PC-3 (cell line): ENCODE measurements at regions of chr3 and their contacts with region 1.

Region 1: DNA sequence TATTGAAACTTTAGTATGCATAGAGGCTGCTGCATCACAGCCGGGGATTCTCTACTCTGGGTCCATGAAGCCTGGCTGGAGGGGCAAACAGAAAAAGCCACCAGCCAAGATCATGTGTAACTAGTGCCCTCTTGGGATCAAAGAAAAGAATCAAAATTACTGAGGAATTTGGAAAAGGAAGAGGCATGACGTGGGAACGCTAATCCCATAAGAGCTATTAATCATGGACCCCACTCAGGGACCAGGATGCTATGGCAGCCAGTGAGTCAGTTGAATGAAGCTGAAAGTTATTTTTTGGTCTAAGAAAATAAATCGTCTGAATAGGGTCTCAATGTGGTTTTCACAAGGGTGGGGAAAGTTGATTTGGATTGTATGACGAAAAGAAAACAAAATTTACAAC is 1165.1 kb downstream of the ROBO2 start:
- DNase-seq: peak; percentile 82
- ATAC-seq: peak; percentile 81
- H3K4me3 ChIP-seq: peak overlapping the region; percentile 51
- H3K27ac ChIP-seq: 0 out of 2 replicates have a peak overlapping the region, but pooled peaks have one; percentile 6
- H3K4me1 ChIP-seq: peaks cover 4% of the 10 kb centered on the region; the same call in 1 of the 2 replicates
- H3K27me3 ChIP-seq: no peaks in the 10 kb centered on the region
- CTCF ChIP-seq: peak; percentile 77

Region 2: DNA sequence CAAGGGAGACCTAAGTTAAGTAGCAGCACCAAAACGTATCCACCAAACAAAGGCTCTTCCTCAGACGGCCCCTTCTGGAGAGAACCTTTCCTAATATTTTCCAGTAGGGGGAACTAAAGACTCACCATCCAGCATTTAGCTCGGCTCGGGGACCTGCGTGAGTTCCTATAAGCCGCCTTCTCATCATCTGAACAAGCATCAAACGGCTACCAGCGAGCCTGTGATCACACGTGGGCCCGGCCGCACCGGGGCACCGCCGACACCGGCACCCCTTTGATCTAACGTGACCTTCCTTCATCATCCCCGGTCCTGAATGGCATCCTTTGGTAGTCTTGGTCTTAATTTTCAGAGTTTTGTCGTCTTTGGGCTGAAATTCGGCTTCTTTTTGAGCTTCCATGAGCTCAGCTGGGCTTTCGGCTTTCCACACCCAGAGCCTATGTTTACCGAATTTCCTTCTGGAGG is 1166.5 kb before region 1 on chr3:
- CTCF ChIA-PET with region 1: interaction called, 8 read pairs
- POLR2A ChIA-PET with region 1: no interaction called
- intact Hi-C with region 1: loop called (anchors 2 kb)
- DNase-seq: peak; percentile 83
- ATAC-seq: peak; percentile 97
- H3K4me3 ChIP-seq: peak overlapping the region; percentile 29; the same call in 1 of the 2 replicates
- H3K27ac ChIP-seq: no peak overlapping the region
- H3K4me1 ChIP-seq: no peaks in the 10 kb centered on the region
- H3K27me3 ChIP-seq: peaks cover 72% of the 10 kb centered on the region
- CTCF ChIP-seq: peak; percentile 77

Region 3: GRCh38 chr3:77320514-77320913 is 884.5 kb before region 1 on chr3:
- CTCF ChIA-PET with region 1: no interaction called
- POLR2A ChIA-PET with region 1: no interaction called
- intact Hi-C with region 1: loop called (anchors 10 kb)
- DNase-seq: peak; percentile 69
- ATAC-seq: no peak
- H3K4me3 ChIP-seq: no peak overlapping the region
- H3K27ac ChIP-seq: no peak overlapping the region
- H3K4me1 ChIP-seq: peaks cover 11% of the 10 kb centered on the region
- H3K27me3 ChIP-seq: peaks cover 6% of the 10 kb centered on the region
- CTCF ChIP-seq: peak; percentile 75

Region 4: GRCh38 chr3:77906102-77906709 is 298.8 kb before region 1 on chr3:
- CTCF ChIA-PET with region 1: no interaction called
- POLR2A ChIA-PET with region 1: no interaction called
- intact Hi-C with region 1: loop called (anchors 1 kb)
- DNase-seq: peak; percentile 96
- ATAC-seq: peak; percentile 95
- H3K4me3 ChIP-seq: no peak overlapping the region
- H3K27ac ChIP-seq: peak overlapping the region; percentile 95
- H3K4me1 ChIP-seq: peaks cover 24% of the 10 kb centered on the region
- H3K27me3 ChIP-seq: no peaks in the 10 kb centered on the region
- CTCF ChIP-seq: no peak; the same call in 1 of the 2 replicates